Common myeloid progenitor, CD34-positive (primary cell): ENCODE measurements at regions of chr12 and their contacts with region 1.

Region 1: GRCh38 chr12:120265473-120266179 is at the start of gene PXN:
- DNase-seq: peak; percentile 72 to 85 (median 83)
- H3K4me3 ChIP-seq: peak within 1 kb of the TSS; percentile 67 to 86 (median 79)
- H3K27ac ChIP-seq: peak within 1 kb of the TSS in 1 of 2 experiments; percentile 61
- H3K4me1 ChIP-seq: peaks cover 13 to 60% (median 45%) of the 10 kb centered on the region in 4 experiments
- H3K27me3 ChIP-seq: no peaks in the 10 kb centered on the region

Region 2: GRCh38 chr12:120150919-120151525 is 114.6 kb before region 1 on chr12:
- CTCF ChIA-PET with region 1: no interaction called
- POLR2A ChIA-PET with region 1: no interaction called
- DNase-seq: no peak
- H3K4me3 ChIP-seq: no peak overlapping the region
- H3K27ac ChIP-seq: no peak overlapping the region
- H3K4me1 ChIP-seq: no peaks in the 10 kb centered on the region
- H3K27me3 ChIP-seq: no peaks in the 10 kb centered on the region

Region 3: DNA sequence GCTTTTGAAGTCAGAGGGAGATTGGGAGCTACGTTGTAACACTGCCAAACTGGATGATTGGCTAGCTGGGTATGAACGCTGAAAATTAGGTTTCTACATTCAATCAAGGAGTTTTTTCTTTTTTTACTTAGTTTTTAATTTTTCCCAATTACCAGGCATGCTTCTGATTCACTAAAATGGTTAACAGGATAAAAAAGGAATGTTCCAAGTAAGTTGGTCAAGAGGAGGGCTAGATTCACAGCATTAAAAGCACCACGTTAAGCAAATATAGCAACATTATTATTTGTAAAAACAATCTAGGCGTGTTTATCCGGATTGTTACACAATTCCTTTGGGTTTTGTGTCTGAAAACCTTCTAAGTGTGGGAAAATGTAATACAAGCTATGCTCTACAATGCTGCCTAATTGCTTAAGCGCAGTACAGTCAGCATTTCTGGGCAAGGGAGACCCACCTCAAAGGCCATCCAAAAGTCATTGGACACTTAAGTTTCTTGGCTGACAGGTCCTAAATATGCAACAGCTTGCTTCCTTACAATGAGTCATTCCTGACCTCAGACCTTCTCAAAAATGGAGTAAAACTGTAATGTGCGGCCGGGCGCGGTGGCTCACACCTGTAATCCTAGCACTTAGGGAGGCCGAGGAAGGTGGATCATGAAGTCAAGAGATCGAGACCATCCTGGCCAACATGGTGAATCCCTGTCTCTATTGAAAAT is 65.9 kb before region 1 on chr12:
- CTCF ChIA-PET with region 1: interaction called, 16 read pairs
- POLR2A ChIA-PET with region 1: interaction called, 8 read pairs
- DNase-seq: peak; percentile 13 to 47 (median 35)
- H3K4me3 ChIP-seq: peak overlapping the region; percentile 86 to 99 (median 96)
- H3K27ac ChIP-seq: peak overlapping the region; percentile 83 to 92
- H3K4me1 ChIP-seq: peaks cover 10 to 46% (median 33%) of the 10 kb centered on the region in 4 experiments
- H3K27me3 ChIP-seq: no peaks in the 10 kb centered on the region

Region 4: GRCh38 chr12:120234643-120235368 is 30.8 kb before region 1 on chr12:
- CTCF ChIA-PET with region 1: interaction called, 879 read pairs
- POLR2A ChIA-PET with region 1: interaction called, 14 read pairs
- DNase-seq: peak in 1 of 3 donors; percentile 24
- H3K4me3 ChIP-seq: peak overlapping the region in 2 of 7 experiments; percentile 18 to 24
- H3K27ac ChIP-seq: peak overlapping the region in 1 of 2 experiments; percentile 16
- H3K4me1 ChIP-seq: peaks cover 28 to 95% (median 90%) of the 10 kb centered on the region in 4 experiments
- H3K27me3 ChIP-seq: no peaks in the 10 kb centered on the region